ENCODE measurements at regions of chr1 and their contacts with region 1.

Region 1: DNA sequence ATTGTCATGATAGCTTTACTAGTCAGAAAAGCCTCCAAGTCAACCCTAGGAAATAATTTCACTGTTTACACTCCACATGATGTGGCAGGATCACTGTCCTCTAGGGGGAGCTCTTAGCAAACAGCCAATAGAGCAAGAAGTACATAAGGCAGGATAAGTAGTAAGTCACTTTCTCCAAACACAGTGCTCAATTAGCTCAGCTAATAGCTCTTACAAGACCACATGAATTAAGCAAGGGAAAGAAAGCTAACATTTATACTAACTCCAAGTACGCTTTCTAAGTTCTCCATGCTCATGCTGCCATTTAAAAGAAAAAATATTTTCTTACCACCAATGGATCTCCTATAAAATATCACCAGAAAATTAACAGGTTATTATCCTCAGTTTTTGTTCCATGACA is 66.9 kb upstream of the LRIF1 start:
- DNase-seq: peak in 8 of 9 experiments; percentile 37 to 74 (median 56)
- ATAC-seq: no peak
- H3K4me3 ChIP-seq: no peak overlapping the region
- H3K4me3 Mint-ChIP-seq: no peak overlapping the region
- H3K27ac ChIP-seq: no peak overlapping the region
- H3K27ac Mint-ChIP-seq: no peak overlapping the region
- H3K4me1 ChIP-seq: no peaks in the 10 kb centered on the region
- H3K4me1 Mint-ChIP-seq: no peaks in the 10 kb centered on the region
- H3K27me3 ChIP-seq: no peaks in the 10 kb centered on the region
- H3K27me3 Mint-ChIP-seq: peaks cover 9% of the 10 kb centered on the region
- CTCF ChIP-seq: peak; percentile 81

Region 2: DNA sequence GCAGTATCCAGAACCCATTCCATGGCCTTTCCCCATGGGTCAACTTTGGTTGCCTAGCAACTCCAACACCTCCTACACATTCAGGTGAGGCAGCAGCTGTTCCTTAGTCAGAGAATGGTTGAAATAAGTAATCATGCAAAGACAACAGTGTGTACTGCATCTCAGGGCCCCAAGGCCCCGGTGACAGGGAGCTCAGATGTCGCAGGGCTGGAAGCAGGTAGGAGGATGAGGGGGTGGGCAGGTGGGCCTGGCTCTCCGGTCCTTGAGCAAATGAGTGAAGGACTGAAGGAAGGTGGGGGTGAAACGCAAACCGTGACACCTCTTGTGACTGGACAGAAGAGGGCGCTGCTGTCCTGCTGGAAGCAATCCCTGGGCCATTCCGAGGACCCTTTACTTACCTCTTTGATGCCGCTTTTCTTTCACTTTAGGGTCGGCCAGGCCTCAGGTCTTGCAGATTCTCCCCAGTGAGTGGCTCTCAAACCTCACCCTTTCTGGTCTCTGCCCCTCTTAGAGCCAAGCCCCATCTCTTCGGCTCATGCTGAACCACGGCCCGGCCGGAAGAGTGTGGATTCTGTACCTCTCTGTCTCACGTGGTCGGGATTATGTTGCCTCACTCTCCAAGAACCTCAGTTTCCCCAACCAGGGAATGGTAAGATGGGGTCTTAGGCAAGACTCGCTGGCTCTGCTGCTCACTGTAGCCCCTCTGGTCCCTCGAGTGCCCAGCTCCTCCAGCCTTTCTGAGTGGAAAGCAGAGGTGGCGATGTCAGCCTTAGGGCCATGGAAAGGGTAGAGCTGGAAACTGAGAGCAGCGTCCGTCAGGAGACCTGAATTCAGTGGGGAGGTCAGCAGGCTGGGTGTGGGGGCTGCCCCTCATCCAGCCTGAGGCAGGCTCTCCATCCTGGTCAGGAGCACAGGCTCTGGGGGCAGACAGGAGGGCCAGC is 506.0 kb before region 1 on chr1:
- CTCF ChIA-PET with region 1: no interaction called
- POLR2A ChIA-PET with region 1: no interaction called
- intact Hi-C with region 1: loop called in 1 of 2 experiments (anchors 1 kb)
- DNase-seq: peak; percentile 8 to 69 (median 44)
- ATAC-seq: peak; percentile 77
- H3K4me3 ChIP-seq: no peak overlapping the region
- H3K4me3 Mint-ChIP-seq: peak overlapping the region; percentile 22
- H3K27ac ChIP-seq: no peak overlapping the region
- H3K27ac Mint-ChIP-seq: no peak overlapping the region
- H3K4me1 ChIP-seq: peaks cover 6% of the 10 kb centered on the region
- H3K4me1 Mint-ChIP-seq: peaks cover 3% of the 10 kb centered on the region
- H3K27me3 ChIP-seq: no peaks in the 10 kb centered on the region
- H3K27me3 Mint-ChIP-seq: peaks cover 26% of the 10 kb centered on the region
- CTCF ChIP-seq: peak; percentile 64

Region 3: DNA sequence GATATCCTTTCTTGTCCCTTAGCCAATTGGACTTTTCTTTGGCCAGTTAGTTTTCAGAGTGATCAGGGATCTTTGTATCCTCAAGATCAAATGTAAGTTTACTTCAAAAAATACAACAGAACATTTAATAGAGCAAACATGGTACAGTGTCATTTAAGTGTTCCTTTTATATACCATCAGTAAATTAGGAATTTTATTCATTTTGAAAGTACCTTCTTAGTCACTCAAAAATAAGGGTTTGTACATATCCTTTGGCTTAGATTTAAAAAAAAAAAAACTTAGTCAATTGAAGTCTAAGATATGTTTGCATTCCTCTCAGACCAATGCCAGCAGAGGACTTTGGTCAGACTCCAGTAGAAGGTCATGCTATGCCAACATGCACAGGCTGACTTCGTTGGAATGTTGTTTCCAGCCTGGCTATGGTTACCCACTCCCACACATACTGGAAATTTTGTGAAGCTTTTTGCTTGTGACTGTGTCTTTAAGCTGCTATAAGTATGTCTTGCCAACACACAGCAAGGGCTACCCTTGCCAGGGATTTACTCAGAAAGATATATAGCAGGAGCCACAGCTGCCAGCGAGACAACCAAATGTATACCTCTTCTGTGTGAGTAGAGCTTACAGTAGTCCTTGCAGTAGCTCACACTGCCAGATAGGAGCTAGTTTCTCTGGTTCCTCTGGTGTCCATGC is 14.6 kb after region 1 on chr1:
- CTCF ChIA-PET with region 1: interaction called, 16 read pairs
- POLR2A ChIA-PET with region 1: no interaction called
- intact Hi-C with region 1: no loop called
- DNase-seq: no peak
- ATAC-seq: no peak
- H3K4me3 ChIP-seq: no peak overlapping the region
- H3K4me3 Mint-ChIP-seq: no peak overlapping the region
- H3K27ac ChIP-seq: no peak overlapping the region
- H3K27ac Mint-ChIP-seq: no peak overlapping the region
- H3K4me1 ChIP-seq: no peaks in the 10 kb centered on the region
- H3K4me1 Mint-ChIP-seq: no peaks in the 10 kb centered on the region
- H3K27me3 ChIP-seq: peaks cover 0 to 4% of the 10 kb centered on the region in 2 experiments
- H3K27me3 Mint-ChIP-seq: peaks cover 7% of the 10 kb centered on the region
- CTCF ChIP-seq: no peak

Region 4: DNA sequence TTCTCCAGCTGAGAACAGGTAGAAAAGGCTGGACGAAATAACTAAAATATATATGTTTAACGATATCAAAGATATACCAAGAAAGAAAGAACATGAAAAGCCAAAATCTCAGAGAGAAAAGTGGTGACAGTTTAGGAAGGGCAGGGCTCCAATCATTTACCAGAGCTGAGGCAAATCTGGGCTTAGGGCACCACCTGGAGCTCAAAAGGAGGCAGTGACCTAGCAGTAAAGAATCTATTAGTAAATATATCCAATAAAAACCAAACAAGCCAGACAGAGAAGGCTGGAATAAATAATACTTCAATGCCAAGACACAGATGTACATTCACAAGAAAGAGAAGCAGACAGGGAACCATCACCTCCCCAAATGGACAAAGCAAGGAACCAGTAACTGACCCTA is 303.6 kb after region 1 on chr1:
- CTCF ChIA-PET with region 1: interaction called, 31 read pairs
- POLR2A ChIA-PET with region 1: no interaction called
- intact Hi-C with region 1: loop called (anchors 1 kb)
- DNase-seq: peak; percentile 19 to 82 (median 57)
- ATAC-seq: peak; percentile 87
- H3K4me3 ChIP-seq: no peak overlapping the region
- H3K4me3 Mint-ChIP-seq: no peak overlapping the region
- H3K27ac ChIP-seq: no peak overlapping the region
- H3K27ac Mint-ChIP-seq: no peak overlapping the region
- H3K4me1 ChIP-seq: no peaks in the 10 kb centered on the region
- H3K4me1 Mint-ChIP-seq: peaks cover 6% of the 10 kb centered on the region
- H3K27me3 ChIP-seq: no peaks in the 10 kb centered on the region
- H3K27me3 Mint-ChIP-seq: no peaks in the 10 kb centered on the region
- CTCF ChIP-seq: peak; percentile 73

Region 5: DNA sequence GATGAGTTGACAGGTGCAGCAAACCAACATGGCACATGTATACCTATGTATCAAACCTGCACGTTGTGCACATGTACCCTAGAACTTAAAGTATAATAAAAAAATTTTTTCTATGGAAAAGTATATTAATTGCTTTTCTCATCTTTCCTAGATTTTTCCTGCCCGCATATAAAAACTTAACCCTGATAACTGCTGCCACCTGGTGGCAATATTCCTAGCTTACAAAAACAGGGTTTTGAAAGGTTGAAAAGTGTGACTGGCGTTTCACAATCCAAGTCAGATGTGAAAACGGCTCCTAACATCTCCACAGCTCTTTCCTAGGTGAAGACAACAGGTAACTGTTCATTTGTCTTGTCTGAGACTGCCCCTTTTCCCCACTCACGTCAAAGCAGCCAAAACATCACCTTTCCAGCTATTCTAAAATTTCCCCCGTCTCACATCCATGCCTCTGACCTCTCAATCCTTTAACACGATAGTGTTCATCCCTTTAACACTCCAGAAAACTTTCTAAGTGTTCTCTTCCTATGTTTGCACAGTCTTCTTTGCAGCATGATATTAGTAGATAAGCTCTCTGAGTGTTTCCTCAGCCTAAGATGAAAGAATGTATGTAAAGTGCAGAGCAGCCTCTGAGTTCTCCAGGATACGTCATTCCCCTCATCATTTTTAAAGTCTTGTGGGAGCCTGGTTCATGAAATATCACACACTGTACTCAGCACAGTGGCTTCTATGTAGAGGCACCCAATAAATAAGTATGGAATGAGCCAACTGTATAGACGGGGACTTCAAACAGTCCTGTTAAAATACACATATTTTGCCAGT is 369.4 kb after region 1 on chr1:
- CTCF ChIA-PET with region 1: interaction called, 29 read pairs
- POLR2A ChIA-PET with region 1: no interaction called
- intact Hi-C with region 1: no loop called
- DNase-seq: peak in 8 of 9 experiments; percentile 24 to 68 (median 52)
- ATAC-seq: no peak
- H3K4me3 ChIP-seq: no peak overlapping the region
- H3K4me3 Mint-ChIP-seq: no peak overlapping the region
- H3K27ac ChIP-seq: no peak overlapping the region
- H3K27ac Mint-ChIP-seq: no peak overlapping the region
- H3K4me1 ChIP-seq: no peaks in the 10 kb centered on the region
- H3K4me1 Mint-ChIP-seq: peaks cover 12% of the 10 kb centered on the region
- H3K27me3 ChIP-seq: no peaks in the 10 kb centered on the region
- H3K27me3 Mint-ChIP-seq: no peaks in the 10 kb centered on the region
- CTCF ChIP-seq: peak; percentile 65

Region 6: DNA sequence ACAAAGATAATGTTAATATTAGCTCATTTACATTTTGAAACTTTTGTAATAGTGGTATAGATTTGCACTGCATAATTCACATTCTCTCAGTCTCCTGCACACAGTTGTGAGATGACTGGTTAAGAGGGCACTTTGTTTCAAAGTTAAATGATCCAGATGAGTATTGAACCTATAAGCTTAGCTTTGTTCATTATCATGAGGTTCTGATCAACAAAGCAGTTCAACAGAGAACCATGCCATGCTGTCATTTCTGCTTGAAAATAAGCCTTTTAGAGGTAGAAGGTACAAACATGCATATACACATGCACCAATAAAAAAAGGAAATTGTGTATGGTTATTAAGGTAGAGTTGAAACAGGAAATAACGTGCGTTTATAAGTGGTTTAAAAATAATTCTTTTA is 593.8 kb after region 1 on chr1:
- CTCF ChIA-PET with region 1: no interaction called
- POLR2A ChIA-PET with region 1: no interaction called
- intact Hi-C with region 1: no loop called
- DNase-seq: peak in 2 of 9 experiments; percentile 48 to 71
- ATAC-seq: peak; percentile 30
- H3K4me3 ChIP-seq: peak overlapping the region in 1 of 2 experiments; percentile 3
- H3K4me3 Mint-ChIP-seq: peak overlapping the region; percentile 27
- H3K27ac ChIP-seq: peak overlapping the region; percentile 3 to 60
- H3K27ac Mint-ChIP-seq: peak overlapping the region; percentile 91
- H3K4me1 ChIP-seq: peaks cover 79% of the 10 kb centered on the region
- H3K4me1 Mint-ChIP-seq: peaks cover 76% of the 10 kb centered on the region
- H3K27me3 ChIP-seq: no peaks in the 10 kb centered on the region
- H3K27me3 Mint-ChIP-seq: no peaks in the 10 kb centered on the region
- CTCF ChIP-seq: no peak

Region 7: DNA sequence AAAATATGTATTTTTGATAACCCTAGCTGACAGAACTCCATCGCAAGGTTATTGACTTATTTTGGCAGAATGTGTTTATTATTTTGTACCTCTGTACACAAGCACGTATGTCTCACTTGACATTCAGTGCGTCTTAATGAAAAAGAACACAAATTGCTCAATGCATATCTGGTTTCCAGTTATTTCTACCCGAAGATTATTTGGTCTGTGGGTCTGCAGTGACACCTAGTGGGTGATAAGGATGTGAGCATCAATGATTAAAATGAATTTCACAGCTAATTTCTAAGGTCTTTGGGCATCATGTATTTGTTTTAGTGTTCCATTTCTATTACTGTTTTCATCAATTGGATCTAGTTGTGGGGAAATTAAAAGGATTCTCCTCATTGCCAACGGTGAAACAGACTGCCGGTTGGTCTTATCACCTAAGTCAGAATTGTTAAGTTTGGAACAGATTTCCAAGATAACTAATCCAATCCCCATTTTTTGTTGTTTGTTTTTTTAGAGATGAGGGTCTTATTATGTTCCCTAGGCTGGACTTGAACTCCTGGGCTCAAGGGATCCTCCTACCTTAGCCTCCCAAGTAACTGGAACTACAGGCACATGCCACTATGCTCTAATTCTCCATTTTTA is 739.0 kb after region 1 on chr1:
- CTCF ChIA-PET with region 1: interaction called, 7 read pairs
- POLR2A ChIA-PET with region 1: no interaction called
- intact Hi-C with region 1: loop called (anchors 2 to 5 kb)
- DNase-seq: peak; percentile 7 to 82 (median 57)
- ATAC-seq: peak; percentile 72
- H3K4me3 ChIP-seq: no peak overlapping the region
- H3K4me3 Mint-ChIP-seq: no peak overlapping the region
- H3K27ac ChIP-seq: no peak overlapping the region
- H3K27ac Mint-ChIP-seq: no peak overlapping the region
- H3K4me1 ChIP-seq: no peaks in the 10 kb centered on the region
- H3K4me1 Mint-ChIP-seq: peaks cover 7% of the 10 kb centered on the region
- H3K27me3 ChIP-seq: no peaks in the 10 kb centered on the region
- H3K27me3 Mint-ChIP-seq: no peaks in the 10 kb centered on the region
- CTCF ChIP-seq: peak; percentile 94

Measured in CD8-positive, alpha-beta T cell (primary cell).